ENCODE measurements at regions of chrX and their contacts with region 1.

Region 1: GRCh38 chrX:31629195-31629594 is 557.4 kb upstream of the FTHL17 start:
- DNase-seq: no peak
- H3K4me3 ChIP-seq: no peak overlapping the region
- H3K27ac ChIP-seq: no peak overlapping the region
- H3K4me1 ChIP-seq: no peaks in the 10 kb centered on the region
- H3K27me3 ChIP-seq: no peaks in the 10 kb centered on the region
- CTCF ChIP-seq: no peak

Region 2: DNA sequence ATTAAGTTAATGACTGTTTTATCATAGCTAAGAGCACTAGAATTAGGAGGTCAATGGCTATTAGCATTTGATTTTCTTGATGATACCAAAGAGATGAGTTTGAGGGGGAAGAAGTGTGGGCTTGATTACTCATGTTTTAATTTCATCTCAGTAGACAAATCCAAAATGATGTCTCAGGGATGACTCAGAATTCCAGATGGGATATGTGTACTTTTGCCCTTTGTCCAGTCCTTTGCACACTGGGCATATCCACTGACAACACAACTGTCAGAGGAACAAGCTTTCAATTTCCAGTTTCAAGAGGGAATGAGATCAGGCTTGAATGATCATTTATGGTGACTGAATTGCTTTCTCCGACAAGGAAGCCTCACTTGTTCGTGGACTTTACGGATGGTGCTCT is 232.1 kb before region 1 on chrX:
- intact Hi-C with region 1: loop called (anchors 10 kb)
- DNase-seq: no peak
- H3K4me3 ChIP-seq: no peak overlapping the region
- H3K27ac ChIP-seq: no peak overlapping the region
- H3K4me1 ChIP-seq: no peaks in the 10 kb centered on the region
- H3K27me3 ChIP-seq: no peaks in the 10 kb centered on the region
- CTCF ChIP-seq: no peak

Measured in ascending aorta (tissue), 2 donors.